ENCODE measurements at regions of chr11 and their contacts with region 1.

Region 1: DNA sequence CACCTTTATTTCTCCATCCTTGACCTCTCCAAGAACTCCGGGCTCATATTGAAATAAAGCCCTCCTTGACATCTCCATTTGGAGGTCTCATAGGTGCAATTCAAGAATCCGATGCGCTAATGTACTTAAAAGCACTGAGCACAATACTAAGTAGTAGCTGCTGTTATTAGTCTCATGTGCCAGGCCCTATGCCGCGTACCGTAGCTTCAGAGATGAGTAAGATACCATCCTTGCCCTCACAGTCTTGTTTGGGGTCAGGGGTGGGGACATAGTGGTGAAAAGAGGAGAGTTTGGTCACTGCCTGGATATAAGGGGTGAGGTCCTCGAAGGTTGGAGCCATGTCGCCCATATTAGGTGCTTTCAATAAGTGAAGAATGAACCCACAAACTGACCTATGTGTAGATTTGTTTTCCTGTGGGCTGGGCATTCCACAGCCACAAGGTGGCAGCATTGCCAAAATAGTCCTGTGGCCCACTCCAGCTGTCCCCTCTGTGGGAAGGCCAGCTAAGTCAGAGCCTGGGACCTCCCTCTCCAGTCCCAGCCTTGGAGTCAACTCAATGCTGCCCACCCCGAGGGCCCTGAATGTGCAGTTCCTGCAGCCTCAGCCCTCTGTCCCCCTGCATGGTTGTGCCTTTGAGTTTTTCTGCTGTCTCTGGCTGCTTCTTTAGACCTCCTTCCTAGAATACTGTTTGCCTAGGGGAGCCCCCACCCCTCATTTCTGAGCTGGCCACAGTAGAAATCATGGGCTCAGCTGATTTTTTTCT is 6.5 kb downstream of the DCPS start:
- DNase-seq: peak; percentile 42 to 84 (median 68)
- ATAC-seq: peak; percentile 66 to 92 (median 88)
- H3K4me3 ChIP-seq: no peak overlapping the region
- H3K27ac ChIP-seq: no peak overlapping the region
- H3K4me1 ChIP-seq: peaks cover 7 to 12% (median 8%) of the 10 kb centered on the region in 3 donors
- H3K27me3 ChIP-seq: no peaks in the 10 kb centered on the region
- CTCF ChIP-seq: peak; percentile 72 to 86 (median 80)

Region 2: DNA sequence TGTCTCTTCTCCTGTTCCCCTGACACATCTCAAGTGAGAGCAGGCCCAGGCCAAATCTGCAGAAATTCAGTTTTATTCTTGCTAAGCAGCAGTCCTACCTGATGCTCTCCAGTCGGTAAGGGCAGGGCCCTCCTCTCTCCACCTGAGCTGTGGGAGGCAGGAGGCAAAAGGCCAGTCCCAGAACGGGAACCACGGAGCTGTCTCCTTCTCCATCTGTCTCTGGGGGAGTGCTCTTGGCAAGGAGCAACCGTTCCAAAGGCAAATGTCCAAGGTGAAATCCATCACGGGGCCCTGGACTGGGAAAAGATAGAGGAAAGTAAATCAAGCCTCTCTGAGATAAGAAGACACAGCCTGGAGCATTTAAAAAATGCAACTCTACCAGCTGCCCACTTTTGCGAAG is 182.5 kb before region 1 on chr11:
- intact Hi-C with region 1: no loop called
- DNase-seq: no peak
- ATAC-seq: peak in 3 of 4 donors; percentile 24 to 55 (median 31)
- H3K4me3 ChIP-seq: no peak overlapping the region
- H3K27ac ChIP-seq: no peak overlapping the region
- H3K4me1 ChIP-seq: no peaks in the 10 kb centered on the region
- H3K27me3 ChIP-seq: no peaks in the 10 kb centered on the region
- CTCF ChIP-seq: no peak

Region 3: GRCh38 chr11:126480410-126481302 is 170.2 kb after region 1 on chr11:
- intact Hi-C with region 1: loop called in 2 of 3 experiments (anchors 5 to 10 kb)
- DNase-seq: peak in 4 of 6 donors; percentile 67 to 83 (median 78)
- ATAC-seq: peak; percentile 88 to 99 (median 96)
- H3K4me3 ChIP-seq: no peak overlapping the region
- H3K27ac ChIP-seq: peak overlapping the region in 1 of 4 donors; percentile 25
- H3K4me1 ChIP-seq: peaks cover 0 to 4% (median 0%) of the 10 kb centered on the region in 3 donors
- H3K27me3 ChIP-seq: no peaks in the 10 kb centered on the region
- CTCF ChIP-seq: peak; percentile 84 to 94 (median 89)